Naive thymus-derived CD4-positive, alpha-beta T cell (primary cell): ENCODE measurements at regions of chr1 and their contacts with region 1.

Region 1: DNA sequence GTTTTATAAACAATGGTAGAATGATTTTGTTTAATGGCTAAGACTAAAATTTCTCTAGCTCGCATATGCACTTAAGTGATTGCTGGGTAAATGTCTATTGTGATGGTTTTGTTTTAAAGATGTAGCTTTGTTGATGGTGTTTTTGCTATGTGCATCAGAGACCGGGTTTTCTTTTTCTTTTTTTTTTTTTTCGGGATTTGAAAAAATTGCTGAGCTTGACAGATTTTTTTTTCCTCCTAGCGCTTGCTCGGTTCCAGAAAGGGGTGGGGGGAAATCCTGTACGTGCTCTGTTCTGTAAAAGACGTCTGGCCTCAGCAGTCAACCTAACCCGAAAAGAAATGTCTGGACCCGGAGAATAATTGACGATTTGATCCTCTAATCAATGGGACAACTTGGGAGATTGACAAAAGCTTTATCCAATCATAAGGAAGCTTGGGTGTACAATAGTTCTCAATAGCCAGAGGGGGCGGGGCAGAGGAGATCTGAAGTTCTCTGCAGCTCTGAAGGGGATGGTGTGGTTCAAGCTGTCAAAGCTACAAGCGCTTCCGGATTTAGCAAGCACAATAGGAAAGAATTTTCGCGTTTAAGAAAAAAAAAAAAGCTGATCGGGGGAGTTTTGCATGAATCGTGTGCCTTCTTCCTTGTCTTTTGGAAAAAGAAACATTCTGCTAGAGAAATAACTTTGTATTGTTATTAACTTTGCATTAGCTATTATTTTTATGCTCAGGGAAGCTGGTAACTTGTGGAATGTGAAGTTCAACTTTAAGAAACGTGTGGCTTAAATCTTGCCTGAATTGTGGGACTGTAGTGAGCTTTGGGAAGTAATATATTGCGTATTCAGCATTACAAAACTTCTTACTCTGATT is 4.5 kb upstream of the NFIA start:
- DNase-seq: peak; percentile 63 to 98 (median 95)
- ATAC-seq: peak; percentile 84
- H3K4me3 ChIP-seq: peak overlapping the region; percentile 73
- H3K4me3 Mint-ChIP-seq: peak overlapping the region; percentile 91 to 98 (median 94)
- H3K27ac ChIP-seq: peak overlapping the region; percentile 75
- H3K27ac Mint-ChIP-seq: peak overlapping the region; percentile 87 to 100 (median 96)
- H3K4me1 ChIP-seq: peaks cover 24 to 41% of the 10 kb centered on the region in 2 donors
- H3K4me1 Mint-ChIP-seq: peaks cover 34 to 49% (median 46%) of the 10 kb centered on the region in 7 donors
- H3K27me3 ChIP-seq: no peaks in the 10 kb centered on the region
- H3K27me3 Mint-ChIP-seq: peaks cover 0 to 58% (median 0%) of the 10 kb centered on the region in 5 donors

Region 2: DNA sequence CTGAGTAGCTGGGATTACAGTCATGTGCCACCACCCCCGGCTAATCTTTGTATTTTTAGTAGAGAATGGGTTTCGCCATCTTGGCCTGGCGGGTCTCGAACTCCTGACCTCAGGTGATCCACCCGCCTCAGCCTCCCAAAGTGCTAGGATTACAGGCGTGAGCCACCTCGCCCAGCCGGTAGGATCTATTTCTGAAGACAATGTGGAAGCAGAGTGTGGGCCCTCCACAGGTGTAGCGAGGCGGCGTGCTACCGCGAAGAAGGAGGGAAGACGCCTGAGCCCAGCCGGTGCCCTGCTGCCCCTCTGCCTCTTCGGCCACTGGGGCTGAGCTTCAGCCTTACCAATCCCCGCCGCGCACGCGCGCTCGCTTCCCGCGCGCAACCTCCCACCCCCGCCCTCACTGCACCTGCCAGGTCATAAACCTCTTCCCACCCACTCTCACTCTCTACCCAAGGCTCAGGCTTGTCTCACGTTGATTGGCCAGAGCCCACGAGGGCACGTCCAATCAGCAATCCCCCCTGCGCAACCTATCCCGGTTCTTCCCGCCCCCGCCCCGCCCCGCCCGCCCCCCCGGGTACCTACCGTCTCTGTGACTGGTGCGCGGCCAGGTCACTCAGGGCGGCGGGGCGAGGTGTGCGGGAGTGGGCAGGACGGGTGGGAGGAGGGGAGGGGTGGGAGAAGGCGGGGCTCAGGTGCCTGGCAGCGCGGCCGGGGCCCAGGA is 1263.6 kb before region 1 on chr1:
- CTCF ChIA-PET with region 1: no interaction called
- POLR2A ChIA-PET with region 1: no interaction called
- intact Hi-C with region 1: loop called in 1 of 2 experiments (anchors 1 kb)
- DNase-seq: peak; percentile 65 to 95 (median 90)
- ATAC-seq: peak; percentile 95
- H3K4me3 ChIP-seq: peak overlapping the region; percentile 75
- H3K4me3 Mint-ChIP-seq: peak overlapping the region in 3 of 10 donors; percentile 90 to 92 (median 91)
- H3K27ac ChIP-seq: peak overlapping the region; percentile 91
- H3K27ac Mint-ChIP-seq: peak overlapping the region in 5 of 9 donors; percentile 72 to 95 (median 88)
- H3K4me1 ChIP-seq: peaks cover 0 to 23% of the 10 kb centered on the region in 2 donors
- H3K4me1 Mint-ChIP-seq: peaks cover under 1 to 8% (median 6%) of the 10 kb centered on the region in 7 donors
- H3K27me3 ChIP-seq: no peaks in the 10 kb centered on the region
- H3K27me3 Mint-ChIP-seq: peaks cover 6 to 25% (median 19%) of the 10 kb centered on the region in 5 donors

Region 3: GRCh38 chr1:61056573-61057439 is 21.1 kb before region 1 on chr1:
- CTCF ChIA-PET with region 1: interaction called, 29 read pairs
- POLR2A ChIA-PET with region 1: interaction called, 6 read pairs
- intact Hi-C with region 1: loop called (anchors 1 kb)
- DNase-seq: peak in 7 of 9 donors; percentile 26 to 53 (median 47)
- ATAC-seq: peak; percentile 79
- H3K4me3 ChIP-seq: peak overlapping the region; percentile 61
- H3K4me3 Mint-ChIP-seq: peak overlapping the region; percentile 82 to 99 (median 90)
- H3K27ac ChIP-seq: no peak overlapping the region
- H3K27ac Mint-ChIP-seq: peak overlapping the region in 4 of 9 donors; percentile 13 to 58 (median 32)
- H3K4me1 ChIP-seq: peaks cover 6 to 15% of the 10 kb centered on the region in 2 donors
- H3K4me1 Mint-ChIP-seq: peaks cover 16 to 42% (median 30%) of the 10 kb centered on the region in 7 donors
- H3K27me3 ChIP-seq: peaks cover 4 to 17% of the 10 kb centered on the region in 2 donors
- H3K27me3 Mint-ChIP-seq: peaks cover 46 to 89% (median 58%) of the 10 kb centered on the region in 5 donors

Region 4: GRCh38 chr1:61368876-61369275 is 291.0 kb after region 1 on chr1:
- CTCF ChIA-PET with region 1: no interaction called
- POLR2A ChIA-PET with region 1: no interaction called
- intact Hi-C with region 1: no loop called
- DNase-seq: no peak
- ATAC-seq: no peak
- H3K4me3 ChIP-seq: no peak overlapping the region
- H3K4me3 Mint-ChIP-seq: no peak overlapping the region
- H3K27ac ChIP-seq: no peak overlapping the region
- H3K27ac Mint-ChIP-seq: no peak overlapping the region
- H3K4me1 ChIP-seq: no peaks in the 10 kb centered on the region
- H3K4me1 Mint-ChIP-seq: no peaks in the 10 kb centered on the region
- H3K27me3 ChIP-seq: no peaks in the 10 kb centered on the region
- H3K27me3 Mint-ChIP-seq: peaks cover 0 to 3% (median 0%) of the 10 kb centered on the region in 5 donors

Region 5: GRCh38 chr1:61724813-61725694 is 647.1 kb after region 1 on chr1 and contains the start of gene TM2D1:
- CTCF ChIA-PET with region 1: no interaction called
- POLR2A ChIA-PET with region 1: interaction called, 5 read pairs
- intact Hi-C with region 1: loop called (anchors 1 kb)
- DNase-seq: peak; percentile 72 to 89 (median 81)
- ATAC-seq: peak; percentile 98
- H3K4me3 ChIP-seq: peak within 1 kb of the TSS; percentile 96
- H3K4me3 Mint-ChIP-seq: peak within 1 kb of the TSS; percentile 86 to 99 (median 96)
- H3K27ac ChIP-seq: peak within 1 kb of the TSS; percentile 92
- H3K27ac Mint-ChIP-seq: peak within 1 kb of the TSS; percentile 94 to 99 (median 97)
- H3K4me1 ChIP-seq: peaks cover 13 to 17% of the 10 kb centered on the region in 2 donors
- H3K4me1 Mint-ChIP-seq: peaks cover 16 to 44% (median 39%) of the 10 kb centered on the region in 7 donors
- H3K27me3 ChIP-seq: no peaks in the 10 kb centered on the region
- H3K27me3 Mint-ChIP-seq: no peaks in the 10 kb centered on the region
- total RNA-seq, gene TM2D1: 26.8 to 57.6 (median 41.1) TPM

Region 6: GRCh38 chr1:62436466-62437256 is 1358.8 kb after region 1 on chr1 and contains the start of gene USP1:
- CTCF ChIA-PET with region 1: no interaction called
- POLR2A ChIA-PET with region 1: interaction called, 4 read pairs
- intact Hi-C with region 1: loop called (anchors 2 kb)
- DNase-seq: peak in 8 of 9 donors; percentile 85 to 100 (median 98)
- ATAC-seq: peak; percentile 90
- H3K4me3 ChIP-seq: peak within 1 kb of the TSS; percentile 98
- H3K4me3 Mint-ChIP-seq: peak within 1 kb of the TSS; percentile 90 to 98 (median 96)
- H3K27ac ChIP-seq: peak within 1 kb of the TSS; percentile 95
- H3K27ac Mint-ChIP-seq: peak within 1 kb of the TSS; percentile 97 to 100 (median 99)
- H3K4me1 ChIP-seq: peaks cover 13 to 29% of the 10 kb centered on the region in 2 donors
- H3K4me1 Mint-ChIP-seq: peaks cover 13 to 56% (median 43%) of the 10 kb centered on the region in 7 donors
- H3K27me3 ChIP-seq: no peaks in the 10 kb centered on the region
- H3K27me3 Mint-ChIP-seq: peaks cover 0 to 7% (median 0%) of the 10 kb centered on the region in 5 donors
- total RNA-seq, gene USP1: 20.5 to 65.7 (median 38.8) TPM